Activated CD8-positive, alpha-beta T cell treated with anti-CD3 and anti-CD28 coated beads, Interleukin-2, amount 10 ng/mL, durations not matched to agents 7 days and 5 days (primary cell): ENCODE measurements at regions of chr16 and their contacts with region 1.

Region 1: GRCh38 chr16:57134982-57135381 is 42.6 kb downstream of the CPNE2 start:
- DNase-seq: peak; percentile 56
- ATAC-seq: peak; percentile 74
- H3K4me3 Mint-ChIP-seq: peak overlapping the region; percentile 76
- H3K27ac Mint-ChIP-seq: peak overlapping the region; percentile 88
- H3K4me1 Mint-ChIP-seq: peaks cover 67% of the 10 kb centered on the region
- H3K27me3 Mint-ChIP-seq: no peaks in the 10 kb centered on the region

Region 2: DNA sequence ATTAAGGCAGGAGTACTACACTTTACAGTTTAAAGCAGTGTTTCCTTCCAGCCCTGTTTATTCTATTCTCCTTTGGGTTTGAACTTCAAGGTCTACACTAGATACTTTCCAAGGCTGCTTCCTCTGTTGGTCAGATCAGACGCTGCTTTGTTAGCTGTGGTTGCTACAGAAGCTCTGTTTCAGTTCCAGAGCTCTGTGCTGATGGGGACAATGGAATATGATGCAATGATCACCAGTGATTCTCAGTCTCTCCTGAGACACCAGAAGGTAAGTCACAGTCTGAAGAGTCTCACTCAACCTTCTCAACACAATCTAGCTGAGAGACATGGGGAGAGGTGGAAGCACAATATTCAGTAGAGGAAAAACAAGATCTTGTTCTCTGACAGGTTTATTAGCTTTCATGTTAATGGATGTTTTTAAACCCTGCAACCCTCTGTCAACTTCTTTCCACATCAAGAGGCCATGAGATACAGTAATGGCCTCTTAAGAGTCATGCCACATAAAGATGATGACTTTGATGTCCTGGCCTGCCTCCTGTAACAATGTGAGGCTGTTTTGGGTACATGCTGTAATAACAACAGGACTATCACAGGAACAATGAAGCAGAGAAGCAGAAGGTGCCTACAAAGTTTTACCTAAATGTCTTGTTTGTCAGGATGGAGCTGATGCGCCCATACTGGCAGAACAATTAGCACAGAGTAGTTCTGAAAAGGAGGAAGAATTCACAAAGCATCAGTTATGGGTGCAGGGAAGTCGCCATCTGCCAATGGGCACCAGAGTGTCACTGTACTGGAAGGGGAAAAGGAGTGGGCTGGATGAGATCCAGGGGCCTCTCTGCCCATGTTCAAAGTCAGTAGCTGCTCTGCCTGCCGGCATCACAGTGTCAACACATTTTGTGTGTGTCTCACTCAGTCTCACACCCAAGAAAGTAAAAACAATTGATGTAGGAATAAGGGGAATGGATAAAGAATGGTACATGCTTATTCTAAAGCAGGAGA is 17.4 kb after region 1 on chr16:
- CTCF ChIA-PET with region 1: interaction called, 11 read pairs
- POLR2A ChIA-PET with region 1: interaction called, 6 read pairs
- DNase-seq: no peak
- ATAC-seq: peak; percentile 65
- H3K4me3 Mint-ChIP-seq: no peak overlapping the region
- H3K27ac Mint-ChIP-seq: peak overlapping the region; percentile 71
- H3K4me1 Mint-ChIP-seq: peaks cover 27% of the 10 kb centered on the region
- H3K27me3 Mint-ChIP-seq: no peaks in the 10 kb centered on the region